ENCODE measurements at regions of chr6 and their contacts with region 1.

Region 1: GRCh38 chr6:157379656-157380454 is 1.1 kb upstream of the ZDHHC14 start:
- DNase-seq: peak; percentile 93
- H3K4me3 Mint-ChIP-seq: peak overlapping the region; percentile 87
- H3K27ac Mint-ChIP-seq: no peak overlapping the region
- H3K4me1 Mint-ChIP-seq: peaks cover 21% of the 10 kb centered on the region
- H3K27me3 Mint-ChIP-seq: no peaks in the 10 kb centered on the region
- CTCF ChIP-seq: no peak

Region 2: DNA sequence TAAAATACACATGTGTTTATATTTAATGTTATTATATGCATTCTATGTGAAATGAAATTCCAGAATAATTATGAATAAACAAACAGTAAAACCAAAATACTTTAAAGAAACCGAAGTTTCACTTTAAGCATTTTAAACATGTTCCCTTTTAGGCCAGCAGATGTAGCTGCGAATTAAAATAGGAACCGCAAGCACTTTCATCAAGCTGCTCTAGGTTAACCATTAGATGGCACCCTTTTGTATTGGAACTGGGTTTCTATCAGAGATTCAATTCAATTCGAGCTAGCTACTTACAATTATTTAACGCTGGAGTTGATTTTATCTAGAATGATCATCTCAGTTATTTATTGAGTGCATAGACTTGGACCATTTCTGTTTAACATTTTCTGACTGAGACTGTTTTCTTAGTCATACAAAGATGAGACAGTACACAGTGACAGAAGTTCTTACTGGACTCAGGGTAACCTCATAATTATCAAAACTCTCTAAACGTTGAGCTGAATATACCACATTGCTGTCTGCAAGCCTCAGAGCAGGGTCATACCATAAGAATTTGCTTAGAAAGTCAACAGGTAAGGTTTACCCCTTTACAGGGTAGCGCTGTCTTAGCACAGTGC is 65.0 kb before region 1 on chr6:
- CTCF ChIA-PET with region 1: interaction called, 7 read pairs
- POLR2A ChIA-PET with region 1: interaction called, 9 read pairs
- intact Hi-C with region 1: loop called (anchors 2 kb)
- DNase-seq: peak; percentile 76
- H3K4me3 Mint-ChIP-seq: no peak overlapping the region
- H3K27ac Mint-ChIP-seq: no peak overlapping the region
- H3K4me1 Mint-ChIP-seq: peaks cover 12% of the 10 kb centered on the region
- H3K27me3 Mint-ChIP-seq: no peaks in the 10 kb centered on the region
- CTCF ChIP-seq: peak; percentile 79

Region 3: GRCh38 chr6:157323255-157323965 is 56.4 kb before region 1 on chr6 and contains the start of gene TMEM242:
- CTCF ChIA-PET with region 1: interaction called, 10 read pairs
- POLR2A ChIA-PET with region 1: interaction called, 105 read pairs
- intact Hi-C with region 1: loop called (anchors 2 kb)
- DNase-seq: peak; percentile 93
- H3K4me3 Mint-ChIP-seq: peak within 1 kb of the TSS; percentile 81
- H3K27ac Mint-ChIP-seq: peak within 1 kb of the TSS; percentile 87
- H3K4me1 Mint-ChIP-seq: no peaks in the 10 kb centered on the region
- H3K27me3 Mint-ChIP-seq: no peaks in the 10 kb centered on the region
- CTCF ChIP-seq: no peak
- total RNA-seq, gene TMEM242: 9.4 and 10.1 TPM in 2 replicates

Region 4: GRCh38 chr6:157368359-157369049 is 11.4 kb before region 1 on chr6:
- CTCF ChIA-PET with region 1: interaction called, 3 read pairs
- POLR2A ChIA-PET with region 1: interaction called, 11 read pairs
- intact Hi-C with region 1: no loop called
- DNase-seq: no peak
- H3K4me3 Mint-ChIP-seq: no peak overlapping the region
- H3K27ac Mint-ChIP-seq: no peak overlapping the region
- H3K4me1 Mint-ChIP-seq: no peaks in the 10 kb centered on the region
- H3K27me3 Mint-ChIP-seq: no peaks in the 10 kb centered on the region
- CTCF ChIP-seq: no peak

Region 5: DNA sequence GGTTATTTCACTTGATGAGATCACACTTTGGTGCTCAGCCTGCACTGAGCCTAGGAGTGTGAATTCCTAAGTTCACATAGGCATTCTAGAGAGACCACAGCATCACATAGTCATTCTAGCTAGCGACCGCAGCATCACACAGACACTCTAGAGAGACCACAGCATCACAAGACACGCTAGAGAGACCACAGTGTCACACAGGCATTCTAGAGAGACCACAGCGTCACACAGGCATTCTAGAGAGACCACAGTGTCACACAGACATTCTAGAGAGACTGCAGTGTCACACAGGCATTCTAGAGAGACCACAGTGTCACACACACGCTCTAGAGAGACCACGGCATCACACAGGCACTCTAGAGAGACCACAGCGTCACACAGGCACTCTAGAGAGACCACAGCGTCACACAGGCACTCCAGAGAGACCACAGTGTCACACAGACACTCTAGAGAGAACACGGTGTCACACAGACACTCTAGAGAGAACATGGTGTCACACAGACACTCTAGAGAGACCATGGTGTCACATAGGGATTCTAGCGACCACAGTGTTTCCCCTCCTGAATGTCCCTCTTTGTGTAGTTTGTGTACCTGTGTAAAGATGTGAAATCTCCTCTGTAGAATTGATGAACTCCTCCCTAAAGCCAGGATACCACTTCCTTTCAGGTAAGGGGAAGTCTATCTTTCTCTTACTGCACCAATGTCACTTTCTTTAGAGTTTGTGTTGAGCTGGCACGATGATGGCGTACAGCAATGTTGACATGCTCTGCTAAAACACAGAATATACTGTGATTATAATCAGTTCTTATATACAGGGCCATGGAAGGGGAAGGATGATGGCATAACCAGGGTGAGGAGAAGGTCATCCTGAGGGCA is 170.5 kb after region 1 on chr6:
- CTCF ChIA-PET with region 1: no interaction called
- POLR2A ChIA-PET with region 1: no interaction called
- intact Hi-C with region 1: loop called (anchors 5 kb)
- DNase-seq: no peak
- H3K4me3 Mint-ChIP-seq: no peak overlapping the region
- H3K27ac Mint-ChIP-seq: no peak overlapping the region
- H3K4me1 Mint-ChIP-seq: peaks cover 17% of the 10 kb centered on the region
- H3K27me3 Mint-ChIP-seq: no peaks in the 10 kb centered on the region
- CTCF ChIP-seq: no peak

Region 6: DNA sequence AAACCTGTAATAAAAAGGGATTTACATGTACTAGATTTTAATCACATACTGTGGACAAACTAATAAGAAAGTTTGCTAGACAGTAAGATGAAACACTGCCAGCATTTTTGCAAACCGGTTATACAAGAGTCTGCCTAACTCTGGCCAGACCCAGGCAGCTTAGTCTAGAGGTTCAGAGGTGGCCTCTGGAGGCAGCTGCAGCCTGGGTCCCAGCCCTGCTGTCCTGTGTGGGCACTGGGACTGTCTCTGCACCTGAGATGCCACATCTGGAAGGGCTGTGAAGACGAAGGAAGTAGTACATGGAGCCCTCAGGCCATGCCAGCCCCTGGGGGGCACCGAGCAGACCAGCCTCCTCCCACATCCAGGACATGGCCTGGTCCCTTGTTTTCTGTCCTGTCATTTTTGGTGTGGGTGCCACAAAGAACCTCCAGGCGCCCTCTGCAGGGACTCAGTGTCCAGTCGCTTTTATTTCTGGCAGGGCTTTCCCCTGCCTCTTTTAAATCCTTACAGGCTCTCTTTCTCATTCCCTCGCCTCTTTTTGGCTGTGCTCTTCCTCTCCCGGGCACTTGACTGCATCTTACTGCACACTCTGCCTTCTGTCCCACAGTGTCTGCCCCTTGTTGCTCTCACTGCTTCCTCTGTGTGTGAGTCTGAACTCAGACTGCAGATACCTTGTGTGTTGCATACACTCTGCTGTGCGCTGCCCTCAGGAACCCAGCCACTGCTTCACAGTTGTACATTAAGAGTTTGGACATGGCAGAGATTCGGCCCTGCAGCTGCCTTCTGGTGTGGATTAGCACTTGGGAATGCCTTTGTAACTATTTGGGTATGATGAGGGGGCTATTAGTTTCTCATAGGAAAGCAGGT is 217.8 kb after region 1 on chr6:
- CTCF ChIA-PET with region 1: interaction called, 4 read pairs
- POLR2A ChIA-PET with region 1: no interaction called
- intact Hi-C with region 1: loop called (anchors 1 kb)
- DNase-seq: peak; percentile 57
- H3K4me3 Mint-ChIP-seq: no peak overlapping the region
- H3K27ac Mint-ChIP-seq: no peak overlapping the region
- H3K4me1 Mint-ChIP-seq: no peaks in the 10 kb centered on the region
- H3K27me3 Mint-ChIP-seq: no peaks in the 10 kb centered on the region
- CTCF ChIP-seq: peak; percentile 56

Region 7: DNA sequence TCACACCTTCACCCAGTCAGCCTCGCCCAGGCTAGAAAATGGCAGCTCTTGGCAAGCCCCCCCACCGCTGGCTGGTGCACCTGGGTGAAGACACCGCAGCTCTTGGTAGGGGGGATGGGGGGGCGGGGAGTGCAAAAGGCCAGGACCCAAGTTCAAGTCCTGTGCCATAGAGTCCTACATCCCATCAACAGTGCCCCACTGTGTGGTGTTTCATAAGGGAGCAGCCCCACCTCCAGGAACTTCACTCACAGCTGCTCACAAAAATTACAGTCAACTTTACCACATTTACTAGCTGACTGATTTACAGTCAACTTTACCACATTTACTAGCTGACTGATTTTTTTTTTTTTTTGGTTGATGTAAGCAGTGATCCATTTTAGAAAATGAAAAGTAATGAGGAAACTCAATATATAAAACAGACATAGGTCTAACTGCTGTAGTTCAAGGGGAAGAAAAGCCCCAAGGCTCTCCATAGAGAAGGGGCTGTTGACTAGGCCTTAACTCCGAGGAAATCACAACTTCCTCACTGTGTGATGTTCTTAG is 234.2 kb after region 1 on chr6:
- CTCF ChIA-PET with region 1: interaction called, 3 read pairs
- POLR2A ChIA-PET with region 1: interaction called, 3 read pairs
- intact Hi-C with region 1: loop called (anchors 1 kb)
- DNase-seq: no peak
- H3K4me3 Mint-ChIP-seq: no peak overlapping the region
- H3K27ac Mint-ChIP-seq: peak overlapping the region; percentile 88
- H3K4me1 Mint-ChIP-seq: peaks cover 24% of the 10 kb centered on the region
- H3K27me3 Mint-ChIP-seq: no peaks in the 10 kb centered on the region
- CTCF ChIP-seq: peak; percentile 5